ENCODE measurements at regions of chr2 and their contacts with region 1.

Region 1: GRCh38 chr2:240913810-240914644 is 7.9 kb downstream of the CROCC2 start:
- DNase-seq: peak; percentile 78
- H3K4me3 ChIP-seq: no peak overlapping the region
- H3K27ac ChIP-seq: peak overlapping the region; percentile 24
- H3K4me1 ChIP-seq: peaks cover 15% of the 10 kb centered on the region
- H3K27me3 ChIP-seq: no peaks in the 10 kb centered on the region
- CTCF ChIP-seq: peak; percentile 95 to 96
- POLR2A ChIP-seq: no peak

Region 2: DNA sequence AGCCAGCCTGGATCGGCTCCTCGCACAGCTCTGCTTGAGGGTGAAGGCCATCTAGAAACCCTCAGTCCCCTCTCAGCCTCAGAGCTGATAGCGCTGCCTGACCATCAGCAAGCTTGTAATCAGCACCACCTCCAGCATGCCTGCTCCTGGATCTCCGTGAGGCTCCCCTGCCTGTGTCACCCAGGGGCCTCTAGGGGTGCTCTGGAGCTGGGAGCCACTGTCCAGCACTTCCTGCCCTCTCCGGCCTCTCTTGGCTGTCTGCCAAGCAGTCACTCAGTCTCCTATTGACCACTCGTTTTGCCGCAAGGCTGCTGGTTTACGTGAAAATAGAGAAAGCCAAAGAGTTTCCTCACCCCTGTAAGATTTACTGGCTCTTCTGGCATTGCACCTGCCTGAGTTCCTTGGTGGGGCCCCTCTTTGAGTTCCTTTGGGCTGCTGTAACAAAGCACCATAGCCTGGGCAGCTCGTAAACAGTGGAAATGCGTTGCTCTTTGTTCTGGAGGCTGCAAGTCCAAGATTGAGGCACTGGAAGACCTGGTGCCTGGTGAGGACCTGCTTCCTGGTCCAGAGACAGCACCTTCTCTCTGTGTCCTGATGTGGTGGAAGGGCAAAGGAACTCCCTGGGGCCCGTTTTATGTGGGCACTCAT is 309.6 kb before region 1 on chr2:
- CTCF ChIA-PET with region 1: no interaction called
- POLR2A ChIA-PET with region 1: no interaction called
- dilution Hi-C with region 1: no loop called
- intact Hi-C with region 1: loop called (anchors 5 kb)
- DNase-seq: peak; percentile 70
- H3K4me3 ChIP-seq: no peak overlapping the region
- H3K27ac ChIP-seq: no peak overlapping the region
- H3K4me1 ChIP-seq: peaks cover 2% of the 10 kb centered on the region
- H3K27me3 ChIP-seq: no peaks in the 10 kb centered on the region
- CTCF ChIP-seq: peak; percentile 74 to 85
- POLR2A ChIP-seq: no peak

Region 3: DNA sequence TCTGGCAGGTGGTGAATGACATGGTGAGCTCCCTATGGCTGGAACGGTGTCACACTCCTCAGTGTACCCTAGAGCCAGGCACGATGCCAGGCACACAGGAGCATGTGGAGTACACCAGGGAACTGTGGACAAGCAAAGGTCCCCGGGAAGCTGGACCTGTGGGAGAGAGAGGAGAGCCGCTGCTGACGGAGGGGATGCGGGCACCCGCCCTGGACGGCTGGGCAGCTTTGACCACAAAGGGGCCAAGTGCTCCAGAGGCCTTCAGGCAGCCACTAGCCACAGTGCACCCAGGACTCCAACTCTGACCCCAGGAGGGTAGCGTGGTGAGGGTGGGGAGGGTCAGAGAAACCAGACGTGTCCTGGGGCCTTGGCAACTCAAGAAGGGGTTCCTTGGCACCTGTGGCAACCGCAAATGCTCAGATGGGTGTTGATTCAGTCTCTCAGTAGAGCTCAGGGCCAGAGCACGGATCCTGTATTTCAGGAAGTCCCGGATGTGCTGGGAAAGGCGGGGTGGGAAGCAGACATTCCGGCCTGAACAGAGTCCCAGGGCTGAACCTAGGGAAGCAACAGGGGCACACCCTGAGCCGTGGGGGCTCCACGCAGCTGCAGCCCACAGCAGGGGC is 15.8 kb before region 1 on chr2:
- CTCF ChIA-PET with region 1: interaction called, 40 read pairs
- POLR2A ChIA-PET with region 1: interaction called, 8 read pairs
- dilution Hi-C with region 1: no loop called
- intact Hi-C with region 1: loop called (anchors 1 kb)
- DNase-seq: peak; percentile 61
- H3K4me3 ChIP-seq: no peak overlapping the region
- H3K27ac ChIP-seq: no peak overlapping the region
- H3K4me1 ChIP-seq: peaks cover 11% of the 10 kb centered on the region
- H3K27me3 ChIP-seq: no peaks in the 10 kb centered on the region
- CTCF ChIP-seq: no peak
- POLR2A ChIP-seq: no peak

Region 4: GRCh38 chr2:240991373-240992263 is 77.6 kb after region 1 on chr2:
- CTCF ChIA-PET with region 1: interaction called, 32 read pairs
- POLR2A ChIA-PET with region 1: no interaction called
- dilution Hi-C with region 1: no loop called
- intact Hi-C with region 1: loop called (anchors 1 kb)
- DNase-seq: peak; percentile 98
- H3K4me3 ChIP-seq: no peak overlapping the region
- H3K27ac ChIP-seq: peak overlapping the region; percentile 73
- H3K4me1 ChIP-seq: peaks cover 28% of the 10 kb centered on the region
- H3K27me3 ChIP-seq: no peaks in the 10 kb centered on the region
- CTCF ChIP-seq: no peak
- POLR2A ChIP-seq: no peak

Region 5: DNA sequence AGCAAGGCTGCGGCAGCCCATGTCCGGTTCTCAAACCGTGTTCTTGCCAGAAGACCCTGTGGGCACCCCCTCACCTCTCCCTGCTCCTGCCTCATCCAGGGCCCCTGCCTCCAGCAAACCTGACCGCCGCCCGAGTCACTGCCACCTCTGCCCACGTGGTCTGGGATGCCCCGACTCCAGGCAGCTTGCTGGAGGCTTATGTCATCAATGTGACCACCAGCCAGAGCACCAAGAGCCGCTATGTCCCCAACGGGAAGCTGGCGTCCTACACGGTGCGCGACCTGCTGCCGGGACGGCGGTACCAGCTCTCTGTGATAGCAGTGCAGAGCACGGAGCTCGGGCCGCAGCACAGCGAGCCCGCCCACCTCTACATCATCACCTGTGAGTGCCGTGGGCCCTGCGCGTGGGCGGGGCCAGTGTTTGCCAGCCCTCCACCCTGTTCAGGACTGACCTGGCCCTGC is 155.8 kb after region 1 on chr2:
- CTCF ChIA-PET with region 1: interaction called, 7 read pairs
- POLR2A ChIA-PET with region 1: no interaction called
- dilution Hi-C with region 1: no loop called
- intact Hi-C with region 1: loop called (anchors 10 kb)
- DNase-seq: no peak
- H3K4me3 ChIP-seq: no peak overlapping the region
- H3K27ac ChIP-seq: no peak overlapping the region
- H3K4me1 ChIP-seq: no peaks in the 10 kb centered on the region
- H3K27me3 ChIP-seq: no peaks in the 10 kb centered on the region
- CTCF ChIP-seq: no peak
- POLR2A ChIP-seq: no peak

Region 6: DNA sequence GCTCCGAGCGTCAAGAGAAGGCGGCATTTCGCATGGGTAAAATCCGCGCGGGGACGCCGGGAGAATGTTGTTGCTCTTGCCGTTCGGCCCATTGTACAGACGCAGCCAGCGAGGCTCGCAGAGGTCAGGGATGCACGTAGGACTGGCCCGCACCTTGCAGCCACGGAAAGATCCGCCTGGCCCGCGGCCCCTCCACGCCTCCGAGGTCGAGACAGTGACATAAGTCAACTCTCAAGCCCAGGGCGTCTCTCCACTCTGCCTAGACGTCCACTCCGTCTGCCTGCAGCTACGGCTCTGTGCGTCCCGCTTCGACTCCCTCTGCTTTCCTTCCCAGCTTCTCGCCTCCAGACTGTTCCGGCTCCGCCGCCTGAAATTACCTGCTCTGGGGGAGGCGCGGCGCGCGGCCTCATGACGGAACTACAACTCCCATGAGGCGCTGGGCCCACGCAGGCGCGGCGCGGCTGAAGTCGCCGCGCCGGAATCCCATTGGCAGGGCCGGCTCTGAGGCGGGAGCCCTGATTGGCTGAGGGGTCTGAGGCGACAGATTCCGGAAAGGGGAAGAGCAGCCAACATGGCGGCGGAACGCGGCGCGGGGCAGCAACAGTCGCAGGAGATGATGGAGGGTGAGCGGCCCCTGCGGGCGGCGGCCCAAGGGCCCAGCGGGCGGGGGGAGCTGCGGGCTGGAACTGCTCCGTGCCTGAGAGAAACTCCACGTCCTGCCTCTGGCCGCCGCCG is 236.1 kb after region 1 on chr2 and contains the start of gene PPP1R7:
- CTCF ChIA-PET with region 1: interaction called, 4 read pairs
- POLR2A ChIA-PET with region 1: no interaction called
- dilution Hi-C with region 1: no loop called
- intact Hi-C with region 1: loop called (anchors 1 kb)
- DNase-seq: peak; percentile 95
- H3K4me3 ChIP-seq: peak within 1 kb of the TSS; percentile 76 to 85 (median 78)
- H3K27ac ChIP-seq: no peak within 1 kb of the TSS
- H3K4me1 ChIP-seq: peaks cover 15% of the 10 kb centered on the region
- H3K27me3 ChIP-seq: no peaks in the 10 kb centered on the region
- CTCF ChIP-seq: peak in 1 of 2 donors; percentile 16
- POLR2A ChIP-seq: peak; percentile 74
- total RNA-seq, gene PPP1R7: 60.8 and 68.2 TPM in 2 replicates

Region 7: DNA sequence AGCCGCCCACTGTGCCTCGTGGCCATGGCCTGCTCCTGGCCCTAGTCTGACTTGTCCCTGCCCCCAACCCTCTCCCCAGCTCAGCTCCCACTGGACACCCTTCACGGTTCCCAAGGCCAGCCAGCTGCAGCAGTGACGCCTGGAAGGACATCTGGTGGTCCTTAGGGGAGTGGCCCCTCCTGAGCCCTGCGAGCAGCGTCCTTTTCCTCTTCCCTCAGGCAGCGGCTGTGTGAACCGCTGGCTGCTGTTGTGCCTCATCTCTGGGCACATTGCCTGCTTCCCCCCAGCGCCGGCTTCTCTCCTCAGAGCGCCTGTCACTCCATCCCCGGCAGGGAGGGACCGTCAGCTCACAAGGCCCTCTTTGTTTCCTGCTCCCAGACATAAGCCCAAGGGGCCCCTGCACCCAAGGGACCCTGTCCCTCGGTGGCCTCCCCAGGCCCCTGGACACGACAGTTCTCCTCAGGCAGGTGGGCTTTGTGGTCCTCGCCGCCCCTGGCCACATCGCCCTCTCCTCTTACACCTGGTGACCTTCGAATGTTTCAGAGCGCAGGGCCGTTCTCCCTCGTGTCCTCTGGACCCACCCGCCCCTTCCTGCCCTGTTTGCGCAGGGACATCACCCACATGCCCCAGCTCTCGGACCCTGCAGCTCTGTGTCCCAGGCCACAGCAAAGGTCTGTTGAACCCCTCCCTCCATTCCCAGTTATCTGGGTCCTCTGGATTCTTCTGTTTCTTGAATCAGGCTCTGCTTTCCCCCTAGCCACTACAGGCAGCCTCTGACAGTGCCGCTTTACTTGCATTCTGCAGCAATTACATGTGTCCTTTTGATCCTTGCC is 310.2 kb after region 1 on chr2:
- CTCF ChIA-PET with region 1: interaction called, 3 read pairs
- POLR2A ChIA-PET with region 1: no interaction called
- dilution Hi-C with region 1: no loop called
- intact Hi-C with region 1: loop called (anchors 2 kb)
- DNase-seq: peak; percentile 23
- H3K4me3 ChIP-seq: no peak overlapping the region
- H3K27ac ChIP-seq: peak overlapping the region; percentile 4
- H3K4me1 ChIP-seq: peaks cover 20% of the 10 kb centered on the region
- H3K27me3 ChIP-seq: no peaks in the 10 kb centered on the region
- CTCF ChIP-seq: peak in 1 of 2 donors; percentile 3
- POLR2A ChIP-seq: no peak